Left ventricle myocardium superior (tissue), 1 donor: ENCODE measurements at regions of chr11 and their contacts with region 1.

Region 1: DNA sequence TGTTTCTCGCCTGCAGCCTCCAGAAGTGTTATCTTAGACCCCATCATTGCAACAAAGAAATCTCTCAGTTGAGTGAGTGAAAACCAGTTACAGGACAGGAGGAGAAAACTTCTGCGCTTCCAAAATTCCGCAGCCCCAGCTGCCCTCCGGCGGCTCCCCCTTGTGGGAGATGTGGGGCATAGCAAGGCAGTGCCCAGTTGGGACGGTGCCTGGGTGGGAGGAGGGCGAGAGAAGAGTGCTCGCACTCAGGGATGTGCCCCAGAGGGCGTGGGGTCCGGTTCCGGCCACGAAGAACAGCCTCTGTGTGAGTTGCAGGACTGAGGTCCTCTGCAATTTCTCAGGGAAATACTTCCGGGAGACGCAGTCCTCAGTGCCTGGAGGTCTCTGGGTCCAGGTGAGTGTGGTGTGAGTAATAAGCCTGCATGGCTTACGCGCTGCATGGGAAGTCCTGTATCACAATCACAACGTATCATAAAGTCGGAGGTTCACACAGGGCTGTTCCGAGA is 87.0 kb upstream of the BLID start:
- DNase-seq: peak; percentile 81
- ATAC-seq: peak; percentile 91

Region 2: DNA sequence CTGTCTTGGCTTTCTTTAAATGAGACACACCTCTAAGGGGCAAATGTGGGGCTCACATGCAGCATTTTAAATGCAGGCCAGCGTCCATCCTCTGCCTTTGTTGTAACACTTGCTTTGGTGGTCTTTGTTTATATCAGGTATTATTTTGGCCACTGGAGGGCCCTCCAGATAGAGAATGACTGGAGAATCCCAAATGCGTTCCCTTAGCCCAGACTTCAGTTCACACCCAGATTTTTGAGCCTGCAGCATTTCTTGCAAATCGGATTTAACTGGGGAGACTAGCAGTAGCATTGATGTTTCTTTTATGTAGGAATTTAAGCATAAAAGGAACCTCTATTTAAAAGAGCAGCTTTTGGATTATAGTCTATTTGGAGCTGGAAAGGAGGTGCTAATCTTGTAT is 550.0 kb before region 1 on chr11:
- intact Hi-C with region 1: loop called (anchors 5 kb)
- DNase-seq: no peak
- ATAC-seq: no peak